ENCODE measurements at regions of chr6 and their contacts with region 1.

Region 1: GRCh38 chr6:37538107-37538506 is 38.4 kb upstream of the CCDC167 start:
- DNase-seq: peak in 1 of 2 experiments; percentile 71
- H3K4me3 ChIP-seq: no peak overlapping the region
- H3K27ac ChIP-seq: no peak overlapping the region
- H3K4me1 ChIP-seq: peaks cover 0 to 16% (median 7%) of the 10 kb centered on the region in 4 experiments; a peak in 5 of 7 replicates
- H3K27me3 ChIP-seq: peaks cover 23 to 52% (median 42%) of the 10 kb centered on the region in 4 experiments
- CTCF ChIP-seq: peak; percentile 72 to 85 (median 80)
- EP300 ChIP-seq: no peak
- POLR2A ChIP-seq: no peak
- RAD21 ChIP-seq: peak; percentile 71 to 80

Region 2: GRCh38 chr6:37259191-37259590 is 278.9 kb before region 1 on chr6:
- CTCF ChIA-PET with region 1: no interaction called
- POLR2A ChIA-PET with region 1: no interaction called
- DNase-seq: no peak
- H3K4me3 ChIP-seq: peak overlapping the region in 2 of 4 experiments; percentile 94; a peak in 3 of 8 replicates
- H3K27ac ChIP-seq: no peak overlapping the region
- H3K4me1 ChIP-seq: peaks cover 0 to 4% (median 3%) of the 10 kb centered on the region in 4 experiments; a peak in 3 of 7 replicates
- H3K27me3 ChIP-seq: no peaks in the 10 kb centered on the region
- CTCF ChIP-seq: no peak
- EP300 ChIP-seq: no peak
- POLR2A ChIP-seq: no peak
- RAD21 ChIP-seq: no peak

Region 3: DNA sequence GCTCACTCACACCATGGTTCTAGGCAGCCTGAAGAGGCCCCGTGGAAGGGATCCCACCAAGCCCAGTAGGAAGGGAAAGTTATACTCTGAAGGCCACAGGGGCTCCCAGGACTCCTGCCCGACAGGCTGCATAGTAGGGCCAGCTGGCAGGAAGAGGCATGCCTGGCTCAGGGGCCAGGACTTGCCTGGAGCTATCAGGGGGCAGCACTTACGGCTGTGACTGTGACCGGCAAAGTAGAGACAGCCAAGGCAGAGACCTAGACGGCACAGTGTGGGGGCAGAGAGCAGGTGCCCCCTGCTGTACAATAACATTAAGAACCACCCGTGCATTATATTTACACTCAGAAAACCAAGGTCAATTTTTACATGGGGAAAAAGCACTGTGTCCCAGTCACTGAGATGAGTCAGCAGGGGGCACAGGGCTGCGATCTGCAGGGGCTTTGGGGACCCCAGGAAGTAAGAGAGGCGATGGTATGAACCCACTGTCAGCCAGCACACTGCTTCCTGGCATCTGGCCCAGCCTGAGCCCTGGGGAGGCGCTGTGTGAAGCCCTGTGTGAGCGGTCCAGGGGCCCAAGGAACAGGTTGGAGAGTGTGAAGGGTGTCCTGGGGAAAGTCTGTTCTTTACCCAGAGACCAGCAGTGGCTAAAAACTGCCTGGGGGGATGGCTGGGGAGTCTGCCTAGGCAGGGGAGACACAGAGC is 48.3 kb before region 1 on chr6:
- CTCF ChIA-PET with region 1: interaction called, 24 read pairs
- POLR2A ChIA-PET with region 1: no interaction called
- DNase-seq: no peak
- H3K4me3 ChIP-seq: no peak overlapping the region
- H3K27ac ChIP-seq: no peak overlapping the region
- H3K4me1 ChIP-seq: peaks cover 12 to 30% (median 18%) of the 10 kb centered on the region in 4 experiments
- H3K27me3 ChIP-seq: peaks cover 0 to 2% (median 0%) of the 10 kb centered on the region in 4 experiments; a peak in 1 of 7 replicates
- CTCF ChIP-seq: no peak
- EP300 ChIP-seq: no peak
- POLR2A ChIP-seq: no peak
- RAD21 ChIP-seq: no peak

Region 4: DNA sequence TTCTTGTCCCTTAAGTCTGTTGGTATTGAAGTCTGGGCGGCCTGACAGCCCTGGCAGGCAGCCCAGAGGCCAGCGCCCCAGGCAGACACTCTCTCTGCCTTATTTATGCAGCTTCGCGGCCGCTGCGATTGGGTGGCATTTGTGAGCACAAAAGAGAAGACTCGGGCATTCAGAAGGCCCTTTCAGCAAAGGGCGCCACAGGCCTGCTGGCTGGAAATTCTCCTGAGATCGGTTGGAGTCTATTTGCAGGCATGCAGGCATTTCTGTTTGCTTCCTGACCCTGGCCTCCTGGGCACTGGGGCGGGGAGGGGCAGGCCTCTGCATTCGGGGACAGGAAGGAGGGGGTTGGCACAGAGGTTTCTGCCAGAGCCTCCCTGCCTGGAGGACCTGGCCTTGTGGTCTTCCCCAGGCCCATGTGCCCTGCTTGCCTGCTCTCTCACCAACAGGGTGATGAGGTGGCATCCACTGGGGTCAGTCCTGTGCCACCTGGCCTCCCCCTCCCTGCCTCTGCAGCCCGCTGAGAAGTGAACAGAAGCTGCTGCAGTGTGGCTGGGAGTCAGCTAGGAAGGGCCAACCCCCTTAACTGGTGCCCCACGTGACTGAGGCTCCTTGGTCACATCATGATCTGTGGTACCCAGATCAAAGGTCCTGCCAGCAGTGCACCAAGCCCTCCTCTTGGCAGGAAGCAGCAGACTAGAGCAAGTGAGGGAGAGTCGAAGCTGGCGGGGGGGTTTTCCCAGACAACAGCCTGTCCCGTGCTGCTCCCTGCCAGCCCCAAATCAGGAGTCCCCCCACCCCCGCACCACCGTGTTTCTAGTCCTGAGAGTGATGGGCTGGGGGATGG is 21.8 kb before region 1 on chr6:
- CTCF ChIA-PET with region 1: interaction called, 80 read pairs
- POLR2A ChIA-PET with region 1: interaction called, 7 read pairs
- DNase-seq: no peak
- H3K4me3 ChIP-seq: no peak overlapping the region
- H3K27ac ChIP-seq: no peak overlapping the region
- H3K4me1 ChIP-seq: peaks cover 2 to 47% (median 39%) of the 10 kb centered on the region in 4 experiments
- H3K27me3 ChIP-seq: peaks cover 0 to 24% (median 16%) of the 10 kb centered on the region in 4 experiments; a peak in 6 of 7 replicates
- CTCF ChIP-seq: no peak
- EP300 ChIP-seq: no peak
- POLR2A ChIP-seq: no peak
- RAD21 ChIP-seq: no peak; a peak in 1 of 4 replicates

Region 5: GRCh38 chr6:37566111-37566949 is 28.2 kb after region 1 on chr6:
- CTCF ChIA-PET with region 1: interaction called, 308 read pairs
- POLR2A ChIA-PET with region 1: interaction called, 4 read pairs
- DNase-seq: peak in 1 of 2 experiments; percentile 95
- H3K4me3 ChIP-seq: peak overlapping the region; percentile 21 to 71 (median 54)
- H3K27ac ChIP-seq: no peak overlapping the region
- H3K4me1 ChIP-seq: peaks cover 2 to 13% (median 5%) of the 10 kb centered on the region in 4 experiments; a peak in 6 of 7 replicates
- H3K27me3 ChIP-seq: no peaks in the 10 kb centered on the region; a peak in 2 of 7 replicates
- CTCF ChIP-seq: peak; percentile 84 to 93 (median 91)
- EP300 ChIP-seq: 0 out of 3 replicates have a peak, but pooled peaks of 1 of the 2 experiments have one; percentile 30
- POLR2A ChIP-seq: no peak
- RAD21 ChIP-seq: peak; percentile 89

Region 6: DNA sequence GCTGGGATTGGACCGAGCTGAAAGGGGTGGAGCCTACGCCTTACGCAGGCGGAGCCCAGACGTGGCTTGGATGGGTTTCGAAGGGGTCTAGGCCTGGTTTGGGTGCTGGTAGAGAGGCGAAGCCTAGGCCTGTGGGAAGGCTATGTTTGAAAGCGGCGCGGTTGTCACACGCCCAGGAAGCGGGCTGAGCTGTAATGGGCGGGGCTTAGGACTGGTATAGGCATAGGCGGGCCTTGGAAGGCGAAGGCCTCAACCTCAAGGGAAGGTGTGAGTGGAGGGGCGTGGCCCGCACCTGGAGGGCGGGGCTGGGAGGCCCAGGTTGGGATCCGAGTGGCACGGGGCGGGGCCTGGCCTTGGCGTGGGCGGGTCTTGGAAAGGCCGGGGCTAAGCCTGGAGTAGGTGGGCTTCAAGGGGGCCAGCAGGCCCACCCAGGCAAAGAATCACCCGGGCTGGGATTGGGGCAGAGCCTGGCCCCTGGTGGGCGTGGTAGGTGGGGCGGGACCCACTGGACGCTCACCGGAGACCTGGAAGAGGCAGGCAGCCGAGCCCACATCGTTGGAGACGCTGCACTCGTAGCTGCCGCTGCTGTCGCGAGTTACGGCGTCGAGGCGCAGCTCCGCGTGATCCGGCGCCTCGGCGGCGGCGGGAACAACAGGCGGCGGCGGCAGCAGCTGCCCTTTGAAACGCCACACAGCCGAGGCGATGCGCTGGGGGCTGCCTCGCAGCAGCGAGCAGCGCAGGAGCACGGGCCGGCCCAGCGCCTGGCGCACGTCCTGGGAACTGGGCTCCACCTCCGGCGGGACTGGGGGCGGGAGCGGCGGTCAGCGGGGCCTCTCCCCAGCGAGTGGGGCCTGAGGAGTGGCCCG is 110.6 kb after region 1 on chr6:
- CTCF ChIA-PET with region 1: interaction called, 26 read pairs
- POLR2A ChIA-PET with region 1: no interaction called
- DNase-seq: peak; percentile 77 to 100
- H3K4me3 ChIP-seq: peak overlapping the region; percentile 9 to 54 (median 38)
- H3K27ac ChIP-seq: no peak overlapping the region
- H3K4me1 ChIP-seq: peaks cover 0 to 10% (median 6%) of the 10 kb centered on the region in 4 experiments; a peak in 4 of 7 replicates
- H3K27me3 ChIP-seq: peaks cover 3 to 27% (median 19%) of the 10 kb centered on the region in 4 experiments
- CTCF ChIP-seq: peak in 1 of 3 experiments; percentile 6; a peak in 1 of 4 replicates
- EP300 ChIP-seq: peak in 1 of 2 experiments; percentile 52; a peak in 1 of 3 replicates
- POLR2A ChIP-seq: 0 out of 3 replicates have a peak, but pooled peaks of 1 of the 2 experiments have one; percentile 30
- RAD21 ChIP-seq: no peak

Region 7: GRCh38 chr6:37679539-37680476 is 141.7 kb after region 1 on chr6:
- CTCF ChIA-PET with region 1: interaction called, 10 read pairs
- POLR2A ChIA-PET with region 1: no interaction called
- DNase-seq: no peak
- H3K4me3 ChIP-seq: no peak overlapping the region
- H3K27ac ChIP-seq: no peak overlapping the region
- H3K4me1 ChIP-seq: peaks cover 0 to 8% (median 3%) of the 10 kb centered on the region in 4 experiments; a peak in 4 of 7 replicates
- H3K27me3 ChIP-seq: no peaks in the 10 kb centered on the region; a peak in 1 of 7 replicates
- CTCF ChIP-seq: no peak
- EP300 ChIP-seq: no peak
- POLR2A ChIP-seq: no peak
- RAD21 ChIP-seq: no peak